Cardiac septum (tissue), 1 donor: ENCODE measurements at regions of chr10 and their contacts with region 1.

Region 1: DNA sequence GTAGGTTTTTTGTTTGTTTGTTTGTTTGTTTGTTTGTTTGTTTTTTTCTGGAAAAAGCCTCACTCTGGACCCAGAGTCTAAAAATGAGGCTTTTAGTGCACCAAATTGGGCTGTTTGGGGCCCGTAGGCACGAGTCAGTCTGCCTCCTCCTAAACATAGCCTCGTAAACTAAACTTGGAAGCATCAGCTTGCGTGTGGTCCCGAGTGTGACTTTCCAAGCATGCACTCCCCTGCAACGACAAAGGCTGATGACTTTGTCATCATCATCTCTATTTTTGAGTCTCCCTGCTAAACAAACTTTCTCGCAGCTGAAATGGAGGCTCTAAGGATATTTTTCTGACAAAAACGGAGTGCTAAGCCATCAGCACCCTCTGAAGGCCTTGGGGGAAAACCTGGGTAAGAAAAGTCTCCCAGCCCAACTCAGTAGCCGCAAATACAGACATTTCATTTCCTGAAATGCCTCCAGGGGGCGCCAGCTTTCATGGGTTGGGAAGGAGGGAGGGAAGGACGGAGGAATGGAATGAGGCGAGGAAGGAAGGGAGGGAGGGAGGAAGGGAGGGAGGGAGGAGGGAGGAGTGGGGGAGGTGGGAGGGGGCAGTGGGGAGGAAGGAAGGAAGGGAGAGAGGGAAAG is 245.9 kb downstream of the KCNMA1 start:
- DNase-seq: peak; percentile 76

Region 2: GRCh38 chr10:77641788-77642397 is 250.2 kb after region 1 on chr10:
- intact Hi-C with region 1: loop called (anchors 5 kb)
- DNase-seq: no peak